Caco-2 (cell line): ENCODE measurements at regions of chr14 and their contacts with region 1.

Region 1: DNA sequence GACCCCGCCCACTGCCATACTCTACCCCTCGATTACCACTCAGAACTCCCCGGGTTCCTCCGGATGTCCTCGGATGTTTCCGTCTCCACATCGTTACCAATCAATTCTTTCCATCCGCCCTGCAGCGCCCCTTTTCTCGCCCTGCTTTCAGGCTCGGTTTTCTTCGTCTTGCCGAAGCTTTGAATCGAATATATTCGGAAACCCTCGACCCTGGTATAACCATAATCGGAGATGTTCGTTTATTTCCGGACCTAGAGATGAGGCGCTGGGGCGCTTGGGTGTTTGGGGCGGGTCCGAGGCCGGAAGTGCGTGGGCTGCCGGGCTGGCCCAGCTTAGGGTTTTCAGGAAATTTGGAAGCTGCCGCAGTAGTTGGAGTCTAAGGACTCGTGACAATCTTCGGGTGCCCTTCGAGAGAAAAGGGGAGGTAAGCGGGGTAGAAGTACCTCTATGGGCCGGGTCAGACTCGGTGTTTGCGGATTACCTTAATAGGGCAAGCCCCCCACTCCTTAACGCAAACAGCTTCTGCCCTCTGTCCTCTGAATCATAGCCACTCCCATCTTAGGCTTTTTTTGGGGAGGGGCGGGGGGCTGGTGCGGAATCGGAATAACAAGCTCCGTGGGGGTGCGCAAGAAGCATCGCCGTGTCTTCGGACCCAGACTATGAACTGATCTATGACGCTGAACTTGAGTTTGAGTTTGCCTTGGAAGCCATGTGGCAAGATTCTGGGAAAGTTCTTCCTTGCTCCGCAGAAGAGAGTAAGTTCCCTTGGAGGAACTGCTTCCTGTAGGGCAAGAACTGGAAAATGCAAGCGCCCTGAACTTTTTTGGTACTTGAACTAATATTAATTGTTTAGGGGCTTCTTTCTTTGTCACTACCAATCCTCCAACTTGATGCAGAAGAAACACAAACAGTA is at the start of gene C14orf119:
- DNase-seq: peak; percentile 98 to 99
- H3K4me3 ChIP-seq: peak within 1 kb of the TSS; percentile 79
- H3K4me3 Mint-ChIP-seq: no peak within 1 kb of the TSS
- H3K27ac Mint-ChIP-seq: no peak within 1 kb of the TSS
- H3K4me1 ChIP-seq: peaks cover 3% of the 10 kb centered on the region; the same call in 1 of the 2 replicates
- H3K4me1 Mint-ChIP-seq: peaks cover 10% of the 10 kb centered on the region
- H3K27me3 ChIP-seq: no peaks in the 10 kb centered on the region
- H3K27me3 Mint-ChIP-seq: no peaks in the 10 kb centered on the region
- CTCF ChIP-seq: no peak
- total RNA-seq, gene C14orf119: 46.3 and 52.0 TPM in 2 replicates

Region 2: GRCh38 chr14:23076785-23077408 is 18.6 kb before region 1 on chr14:
- CTCF ChIA-PET with region 1: interaction called, 26 read pairs
- POLR2A ChIA-PET with region 1: interaction called, 13 read pairs
- intact Hi-C with region 1: loop called (anchors 1 kb)
- DNase-seq: peak in 1 of 2 experiments; percentile 55
- H3K4me3 ChIP-seq: no peak overlapping the region
- H3K4me3 Mint-ChIP-seq: no peak overlapping the region
- H3K27ac Mint-ChIP-seq: no peak overlapping the region
- H3K4me1 ChIP-seq: peaks cover 58% of the 10 kb centered on the region
- H3K4me1 Mint-ChIP-seq: peaks cover 29% of the 10 kb centered on the region
- H3K27me3 ChIP-seq: no peaks in the 10 kb centered on the region
- H3K27me3 Mint-ChIP-seq: no peaks in the 10 kb centered on the region
- CTCF ChIP-seq: peak; percentile 50 to 60